Thyroid gland (tissue), 4 donors: ENCODE measurements at regions of chr1 and their contacts with region 1.

Region 1: GRCh38 chr1:110460253-110461220 is 9.6 kb downstream of the PROK1 start:
- DNase-seq: peak; percentile 74 to 80
- H3K4me3 ChIP-seq: no peak overlapping the region
- H3K27ac ChIP-seq: no peak overlapping the region
- H3K4me1 ChIP-seq: no peaks in the 10 kb centered on the region
- H3K27me3 ChIP-seq: no peaks in the 10 kb centered on the region
- CTCF ChIP-seq: peak; percentile 86 to 97 (median 92)
- POLR2A ChIP-seq: no peak

Region 2: GRCh38 chr1:110203021-110203661 is 257.4 kb before region 1 on chr1:
- intact Hi-C with region 1: loop called (anchors 2 kb)
- DNase-seq: peak; percentile 49 to 50
- H3K4me3 ChIP-seq: no peak overlapping the region
- H3K27ac ChIP-seq: no peak overlapping the region
- H3K4me1 ChIP-seq: no peaks in the 10 kb centered on the region
- H3K27me3 ChIP-seq: no peaks in the 10 kb centered on the region
- CTCF ChIP-seq: peak; percentile 60 to 88 (median 73)
- POLR2A ChIP-seq: no peak

Region 3: GRCh38 chr1:110312188-110313121 is 148.1 kb before region 1 on chr1:
- intact Hi-C with region 1: loop called (anchors 5 kb)
- DNase-seq: peak; percentile 78 to 84
- H3K4me3 ChIP-seq: no peak overlapping the region
- H3K27ac ChIP-seq: no peak overlapping the region
- H3K4me1 ChIP-seq: peaks cover 0 to 5% of the 10 kb centered on the region in 2 donors
- H3K27me3 ChIP-seq: no peaks in the 10 kb centered on the region
- CTCF ChIP-seq: peak; percentile 73 to 92 (median 87)
- POLR2A ChIP-seq: no peak

Region 4: GRCh38 chr1:110412576-110412975 is 48.0 kb before region 1 on chr1:
- intact Hi-C with region 1: loop called (anchors 2 kb)
- DNase-seq: peak; percentile 74 to 82
- H3K4me3 ChIP-seq: no peak overlapping the region
- H3K27ac ChIP-seq: no peak overlapping the region
- H3K4me1 ChIP-seq: peaks cover 6 to 7% of the 10 kb centered on the region in 2 donors
- H3K27me3 ChIP-seq: no peaks in the 10 kb centered on the region
- CTCF ChIP-seq: peak in 5 of 6 experiments; percentile 48 to 89 (median 74)
- POLR2A ChIP-seq: no peak

Region 5: DNA sequence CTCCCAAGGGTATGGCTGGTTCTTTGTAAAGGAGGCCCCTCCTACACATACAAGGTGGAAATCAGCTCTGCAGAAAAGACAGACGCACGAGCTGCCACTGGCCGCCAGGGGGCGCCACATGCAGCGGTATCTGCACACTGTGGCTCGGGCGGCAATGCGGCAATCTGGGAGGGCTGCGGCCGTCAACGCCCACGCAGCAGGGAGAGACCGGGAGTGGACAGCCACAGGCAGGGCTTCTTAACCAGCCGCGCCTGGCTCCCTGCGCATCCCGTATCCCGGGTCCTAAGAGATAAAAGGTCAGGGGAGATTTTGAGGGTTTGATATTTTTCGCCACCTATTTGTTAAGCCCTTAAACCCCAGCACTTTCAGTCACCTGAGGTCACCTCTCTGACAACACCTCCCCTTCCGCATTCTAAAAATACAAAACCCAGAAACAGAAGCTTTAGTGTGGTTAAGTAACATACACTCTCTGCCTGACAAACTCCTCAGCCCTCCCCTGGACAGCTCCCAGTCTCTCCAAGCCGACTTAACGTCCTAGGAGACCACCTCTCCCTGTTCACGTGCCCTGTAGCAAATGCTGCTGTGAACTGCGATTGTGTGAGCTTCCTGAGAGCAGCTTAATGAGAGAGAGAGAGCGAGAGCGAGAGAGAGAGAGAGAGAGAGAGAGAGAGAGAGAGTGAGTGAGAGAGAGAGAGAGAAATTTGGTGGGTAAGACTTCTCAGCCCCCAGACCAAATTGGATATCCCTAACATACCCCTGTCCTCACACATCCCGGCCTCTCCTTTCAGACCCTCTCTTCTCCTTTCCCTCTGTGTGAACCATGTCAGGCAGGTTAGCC is 159.1 kb after region 1 on chr1:
- intact Hi-C with region 1: no loop called
- DNase-seq: peak; percentile 90 to 94
- H3K4me3 ChIP-seq: no peak overlapping the region
- H3K27ac ChIP-seq: peak overlapping the region; percentile 8 to 39 (median 12)
- H3K4me1 ChIP-seq: peaks cover 6 to 16% of the 10 kb centered on the region in 2 donors
- H3K27me3 ChIP-seq: no peaks in the 10 kb centered on the region
- CTCF ChIP-seq: peak; percentile 87 to 99 (median 93)
- POLR2A ChIP-seq: peak in 1 of 2 donors; percentile 13